CD14-positive monocyte (primary cell): ENCODE measurements at regions of chr3 and their contacts with region 1.

Region 1: DNA sequence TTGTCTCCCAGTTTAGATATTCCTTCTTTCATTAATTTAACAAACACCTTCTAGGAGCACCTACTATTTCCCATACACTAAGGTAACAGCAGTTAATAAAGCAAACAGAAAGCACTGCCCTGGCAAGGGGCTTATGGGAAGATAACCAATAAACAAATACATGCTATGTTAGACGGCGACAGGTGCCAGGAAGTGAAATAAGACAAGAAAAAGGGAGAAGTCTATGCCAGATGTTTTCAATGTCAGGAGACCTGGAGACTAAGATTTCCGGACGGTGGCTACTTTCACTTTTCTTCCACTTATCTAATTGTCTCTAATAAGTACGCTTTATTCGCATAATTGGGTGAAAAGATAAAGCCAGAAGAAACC is 32.5 kb upstream of the ZNF445 start:
- DNase-seq: peak in 1 of 3 donors; percentile 3
- H3K4me3 ChIP-seq: peak overlapping the region; percentile 54 to 100 (median 90)
- H3K4me3 Mint-ChIP-seq: peak overlapping the region; percentile 92
- H3K27ac ChIP-seq: peak overlapping the region in 1 of 2 donors; percentile 82
- H3K27ac Mint-ChIP-seq: peak overlapping the region in 4 of 7 donors; percentile 72 to 93 (median 82)
- H3K4me1 ChIP-seq: peaks cover 16% of the 10 kb centered on the region in 2 donors
- H3K4me1 Mint-ChIP-seq: peaks cover 25% of the 10 kb centered on the region
- H3K27me3 ChIP-seq: no peaks in the 10 kb centered on the region
- H3K27me3 Mint-ChIP-seq: peaks cover 1 to 4% (median 1%) of the 10 kb centered on the region in 3 donors
- CTCF ChIP-seq: no peak

Region 2: DNA sequence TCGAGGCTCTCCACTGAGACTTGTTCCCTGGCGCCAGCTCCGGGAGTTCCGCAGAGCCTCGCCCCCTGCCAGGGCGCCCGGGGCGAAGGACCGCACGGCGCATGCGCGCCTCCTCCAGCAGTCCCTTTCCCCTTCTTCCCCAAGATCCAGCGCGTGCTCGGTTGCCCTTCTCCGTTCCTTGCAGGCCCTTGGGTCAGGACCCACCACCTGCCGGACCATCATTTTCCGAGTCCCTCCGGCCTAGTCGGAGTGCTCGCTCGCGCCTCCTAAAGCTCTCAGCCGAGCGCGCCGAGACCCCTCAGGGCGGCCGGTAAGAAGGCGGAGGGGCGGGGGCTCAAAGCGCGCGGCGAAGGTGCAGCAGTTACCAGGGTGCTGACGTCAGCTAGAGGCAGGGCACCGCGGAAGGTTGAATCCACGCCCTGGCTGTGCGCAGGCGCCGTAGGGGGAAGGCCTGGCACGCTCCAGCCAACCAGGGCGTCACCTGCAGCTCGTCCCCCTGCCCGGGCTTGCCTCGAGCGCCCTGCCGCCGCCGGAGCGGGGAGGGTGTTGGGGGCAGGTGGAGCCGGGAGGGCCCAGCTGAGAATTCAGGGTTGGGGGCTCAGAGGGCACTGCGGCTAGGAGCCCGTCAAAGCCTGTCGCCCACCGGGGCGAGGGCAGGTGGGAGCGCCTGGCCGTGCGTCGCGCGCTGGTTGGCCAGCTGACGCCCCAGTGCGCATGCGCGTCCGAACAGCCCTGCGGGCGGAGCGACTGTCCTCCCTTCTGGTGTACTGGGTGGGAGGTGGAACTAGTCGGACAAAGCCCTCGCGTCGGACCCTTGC is 171.8 kb before region 1 on chr3 and contains the start of gene TCAIM:
- intact Hi-C with region 1: loop called (anchors 5 to 10 kb)
- DNase-seq: peak; percentile 98 to 99 (median 98)
- H3K4me3 ChIP-seq: peak within 1 kb of the TSS; percentile 89 to 92 (median 91)
- H3K4me3 Mint-ChIP-seq: peak within 1 kb of the TSS; percentile 99
- H3K27ac ChIP-seq: peak within 1 kb of the TSS; percentile 88 to 98
- H3K27ac Mint-ChIP-seq: peak within 1 kb of the TSS; percentile 97 to 99 (median 98)
- H3K4me1 ChIP-seq: peaks cover 14 to 17% of the 10 kb centered on the region in 2 donors
- H3K4me1 Mint-ChIP-seq: peaks cover 27% of the 10 kb centered on the region
- H3K27me3 ChIP-seq: no peaks in the 10 kb centered on the region
- H3K27me3 Mint-ChIP-seq: peaks cover 0 to 2% (median 0%) of the 10 kb centered on the region in 3 donors
- CTCF ChIP-seq: no peak
- polyA plus RNA-seq, gene TCAIM: 9.1 to 26.7 (median 20.0) TPM

Region 3: GRCh38 chr3:44477312-44478030 is 32.5 kb before region 1 on chr3 and contains the start of gene ZNF445:
- intact Hi-C with region 1: loop called (anchors 5 kb)
- DNase-seq: peak; percentile 68 to 75 (median 71)
- H3K4me3 ChIP-seq: peak within 1 kb of the TSS; percentile 64 to 96 (median 83)
- H3K4me3 Mint-ChIP-seq: peak within 1 kb of the TSS; percentile 92 to 97
- H3K27ac ChIP-seq: peak within 1 kb of the TSS in 1 of 2 donors; percentile 68
- H3K27ac Mint-ChIP-seq: peak within 1 kb of the TSS; percentile 47 to 87 (median 77)
- H3K4me1 ChIP-seq: peaks cover 16 to 28% of the 10 kb centered on the region in 2 donors
- H3K4me1 Mint-ChIP-seq: peaks cover 28% of the 10 kb centered on the region
- H3K27me3 ChIP-seq: no peaks in the 10 kb centered on the region
- H3K27me3 Mint-ChIP-seq: peaks cover 1 to 4% (median 2%) of the 10 kb centered on the region in 3 donors
- CTCF ChIP-seq: no peak
- polyA plus RNA-seq, gene ZNF445: 0.41 to 2.5 (median 1.1) TPM

Region 4: DNA sequence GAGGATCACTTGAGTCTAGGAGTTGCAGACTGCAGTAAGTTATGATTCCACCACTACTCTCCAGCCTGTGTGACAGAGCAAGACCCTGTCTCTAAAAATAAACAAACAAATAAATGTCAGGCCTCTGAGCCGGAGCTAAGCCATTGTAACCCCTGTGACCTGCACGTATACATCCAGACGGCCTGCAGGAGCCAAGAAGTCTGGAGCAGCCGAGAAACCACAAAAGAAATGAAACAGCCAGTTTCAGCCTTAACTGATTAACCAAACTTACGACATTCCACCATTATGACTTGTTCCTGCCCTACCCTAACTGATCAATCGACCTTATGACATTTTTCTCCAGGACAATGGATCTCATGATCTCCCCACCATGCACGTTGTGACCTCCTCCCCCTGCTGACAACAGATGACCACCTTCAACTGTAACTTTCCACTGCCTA is 12.5 kb after region 1 on chr3:
- intact Hi-C with region 1: no loop called
- DNase-seq: no peak
- H3K4me3 ChIP-seq: no peak overlapping the region
- H3K4me3 Mint-ChIP-seq: no peak overlapping the region
- H3K27ac ChIP-seq: no peak overlapping the region
- H3K27ac Mint-ChIP-seq: no peak overlapping the region
- H3K4me1 ChIP-seq: peaks cover 4 to 6% of the 10 kb centered on the region in 2 donors
- H3K4me1 Mint-ChIP-seq: peaks cover 8% of the 10 kb centered on the region
- H3K27me3 ChIP-seq: no peaks in the 10 kb centered on the region
- H3K27me3 Mint-ChIP-seq: peaks cover 5 to 10% (median 6%) of the 10 kb centered on the region in 3 donors
- CTCF ChIP-seq: no peak